Activated CD4-positive, alpha-beta T cell treated with anti-CD3 and anti-CD28 coated beads, Interleukin-2, amount 10 ng/mL, durations not matched to agents 24 days and 14 days (primary cell): ENCODE measurements at regions of chr2 and their contacts with region 1.

Region 1: GRCh38 chr2:176140513-176141317 is 10.6 kb upstream of the HOXD4 start:
- DNase-seq: peak; percentile 92
- H3K4me3 Mint-ChIP-seq: peak overlapping the region; percentile 20
- H3K27ac Mint-ChIP-seq: no peak overlapping the region
- H3K4me1 Mint-ChIP-seq: peaks cover 4% of the 10 kb centered on the region
- H3K27me3 Mint-ChIP-seq: peaks cover 72% of the 10 kb centered on the region

Region 2: DNA sequence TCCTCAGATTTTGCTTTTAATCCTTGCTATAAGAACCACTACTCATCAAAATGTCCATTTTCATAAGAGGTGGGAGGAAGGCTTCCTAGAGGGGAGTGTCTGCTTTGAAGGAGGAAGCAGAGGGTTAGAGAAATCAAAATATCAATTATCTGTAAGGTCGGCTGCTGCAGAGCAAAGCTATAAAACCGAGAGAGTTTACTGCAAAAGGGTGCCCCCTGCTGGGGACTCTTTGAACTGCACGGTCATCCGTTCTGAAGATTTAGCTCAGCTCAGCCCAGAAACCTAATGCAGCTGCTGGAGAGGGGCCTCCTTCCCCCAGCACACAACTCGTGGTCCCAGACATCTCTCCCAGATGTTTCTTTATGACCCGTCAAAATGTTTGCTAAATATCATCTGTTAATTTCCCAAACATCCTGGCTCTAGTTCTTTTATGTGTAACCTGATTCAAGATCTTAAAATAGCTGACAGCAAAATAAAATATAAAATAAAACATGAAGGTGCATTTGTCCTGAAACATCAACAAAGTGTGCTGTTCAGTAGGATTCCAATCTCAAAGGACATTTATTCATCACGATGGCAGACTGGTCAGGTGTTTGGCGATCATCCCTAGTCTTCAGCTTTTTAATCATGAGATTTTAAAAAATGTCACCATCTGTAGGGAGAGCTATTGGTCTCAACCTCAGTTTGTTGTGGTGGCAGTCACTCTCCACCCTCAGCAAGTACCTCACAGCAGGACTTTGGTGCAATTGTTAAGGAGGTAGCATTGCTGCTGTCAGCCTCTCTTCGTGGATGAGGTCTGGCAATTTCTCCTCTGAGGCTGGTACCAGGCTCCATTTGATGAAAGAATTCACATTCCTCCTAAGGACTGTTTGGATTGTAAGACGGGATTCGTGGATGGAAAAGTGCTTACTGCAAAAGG is 314.4 kb after region 1 on chr2:
- intact Hi-C with region 1: loop called (anchors 1 kb)
- DNase-seq: peak; percentile 93
- H3K4me3 Mint-ChIP-seq: no peak overlapping the region
- H3K27ac Mint-ChIP-seq: no peak overlapping the region
- H3K4me1 Mint-ChIP-seq: no peaks in the 10 kb centered on the region
- H3K27me3 Mint-ChIP-seq: peaks cover 41% of the 10 kb centered on the region

Region 3: DNA sequence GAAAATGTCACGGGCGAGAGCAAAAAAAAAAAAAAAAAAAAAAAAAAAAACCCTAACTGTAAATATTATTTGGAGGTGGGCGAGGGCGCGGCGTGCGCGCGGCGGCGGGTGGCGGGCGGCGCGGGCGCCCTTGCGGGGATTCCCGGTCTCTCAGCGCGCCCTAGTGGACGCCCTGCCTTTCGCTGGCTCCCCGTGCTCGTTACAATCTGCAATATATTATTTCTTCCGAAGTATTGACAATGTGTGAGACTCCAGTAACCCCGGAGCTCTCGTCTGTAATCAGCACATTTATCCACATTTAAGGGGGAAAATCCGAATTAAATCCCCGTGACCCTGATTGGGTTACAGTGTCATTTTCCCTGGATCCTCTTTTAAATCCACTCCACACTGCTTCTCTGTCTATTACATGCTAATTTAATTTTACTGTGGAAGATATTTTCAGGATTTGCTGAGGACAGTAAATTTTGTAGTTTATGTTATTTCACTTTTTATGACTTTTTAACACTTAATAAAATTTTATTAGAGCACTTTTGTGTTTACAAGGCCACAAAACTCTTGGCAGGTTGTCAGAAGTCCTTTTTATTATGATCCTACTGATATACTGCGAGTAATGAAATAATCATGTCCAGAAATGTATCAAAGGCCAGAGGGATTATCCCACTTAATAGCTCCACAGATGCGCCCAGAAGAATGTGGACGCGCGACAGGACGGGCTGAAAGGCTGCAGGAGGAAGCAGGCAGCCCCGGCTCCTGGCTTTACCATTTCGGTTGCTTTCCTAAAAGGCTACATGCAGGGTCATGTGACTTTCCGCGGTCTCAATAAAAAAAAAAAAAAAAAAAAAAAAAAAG is 497.7 kb after region 1 on chr2:
- intact Hi-C with region 1: loop called (anchors 2 kb)
- DNase-seq: peak; percentile 87
- H3K4me3 Mint-ChIP-seq: peak overlapping the region; percentile 77
- H3K27ac Mint-ChIP-seq: no peak overlapping the region
- H3K4me1 Mint-ChIP-seq: peaks cover 5% of the 10 kb centered on the region
- H3K27me3 Mint-ChIP-seq: peaks cover 62% of the 10 kb centered on the region

Region 4: GRCh38 chr2:176814306-176815052 is 673.8 kb after region 1 on chr2:
- intact Hi-C with region 1: loop called (anchors 10 kb)
- DNase-seq: peak; percentile 61
- H3K4me3 Mint-ChIP-seq: no peak overlapping the region
- H3K27ac Mint-ChIP-seq: no peak overlapping the region
- H3K4me1 Mint-ChIP-seq: peaks cover 8% of the 10 kb centered on the region
- H3K27me3 Mint-ChIP-seq: peaks cover 3% of the 10 kb centered on the region